Naive thymus-derived CD4-positive, alpha-beta T cell (primary cell): ENCODE measurements at regions of chr6 and their contacts with region 1.

Region 1: DNA sequence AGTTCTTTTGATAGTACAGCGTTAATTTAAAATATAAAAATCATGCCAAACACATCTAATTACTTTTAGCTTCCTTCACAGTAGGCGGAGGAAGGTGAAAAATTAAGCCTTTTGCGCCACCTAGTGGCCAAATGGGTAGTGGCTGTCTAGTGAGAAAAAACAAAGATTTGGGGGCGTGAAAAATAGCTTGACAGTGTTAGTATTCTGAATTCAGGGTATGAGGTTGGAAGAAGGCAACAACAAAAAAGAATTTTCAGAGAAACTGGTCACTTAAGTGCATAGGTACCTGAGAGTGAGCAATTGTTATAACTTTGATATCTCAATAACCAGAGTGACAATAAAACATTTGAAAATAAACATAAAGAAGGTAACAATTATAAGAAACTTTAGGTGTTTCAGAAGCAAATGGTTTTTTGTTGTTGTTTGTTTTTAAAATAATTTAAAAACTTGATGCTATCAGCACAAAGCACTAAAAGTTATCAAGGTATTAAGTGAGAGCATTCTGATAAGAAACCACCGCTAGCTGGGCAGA is 14.3 kb downstream of the PSMB9 start:
- DNase-seq: peak; percentile 69 to 87 (median 82)
- ATAC-seq: peak; percentile 87
- H3K4me3 ChIP-seq: no peak overlapping the region
- H3K4me3 Mint-ChIP-seq: peak overlapping the region in 3 of 10 donors; percentile 0 to 65 (median 50)
- H3K27ac ChIP-seq: no peak overlapping the region
- H3K27ac Mint-ChIP-seq: peak overlapping the region in 4 of 9 donors; percentile 1 to 78 (median 14)
- H3K4me1 ChIP-seq: peaks cover 4 to 20% of the 10 kb centered on the region in 2 donors
- H3K4me1 Mint-ChIP-seq: peaks cover 18 to 36% (median 34%) of the 10 kb centered on the region in 7 donors
- H3K27me3 ChIP-seq: no peaks in the 10 kb centered on the region
- H3K27me3 Mint-ChIP-seq: peaks cover 0 to 4% (median 0%) of the 10 kb centered on the region in 5 donors

Region 2: DNA sequence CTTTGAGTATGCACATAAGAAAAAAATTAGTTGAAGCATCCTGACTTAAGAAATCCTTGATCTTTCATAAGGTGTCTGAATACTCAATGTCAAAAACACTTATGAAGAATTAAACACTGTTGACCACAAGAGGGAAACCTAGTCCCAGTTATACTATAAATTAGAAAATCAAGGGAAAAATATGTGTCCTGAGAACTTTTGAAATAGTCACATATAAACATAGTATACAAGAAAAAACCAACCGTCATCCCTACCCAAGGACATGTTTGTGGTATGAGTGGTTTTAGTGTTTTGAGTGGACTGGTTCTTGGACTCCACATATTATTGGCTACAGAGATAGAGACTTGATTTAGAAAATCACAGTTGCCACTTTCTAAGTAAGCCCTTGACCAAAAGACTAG is 436.3 kb before region 1 on chr6:
- CTCF ChIA-PET with region 1: interaction called, 6 read pairs
- POLR2A ChIA-PET with region 1: no interaction called
- intact Hi-C with region 1: loop called in 1 of 2 experiments (anchors 1 kb)
- DNase-seq: peak in 5 of 9 donors; percentile 16 to 47 (median 33)
- ATAC-seq: peak; percentile 52
- H3K4me3 ChIP-seq: no peak overlapping the region
- H3K4me3 Mint-ChIP-seq: no peak overlapping the region
- H3K27ac ChIP-seq: no peak overlapping the region
- H3K27ac Mint-ChIP-seq: no peak overlapping the region
- H3K4me1 ChIP-seq: no peaks in the 10 kb centered on the region
- H3K4me1 Mint-ChIP-seq: peaks cover 0 to 2% (median 0%) of the 10 kb centered on the region in 7 donors
- H3K27me3 ChIP-seq: peaks cover 0 to 4% of the 10 kb centered on the region in 2 donors
- H3K27me3 Mint-ChIP-seq: peaks cover 0 to 47% (median 3%) of the 10 kb centered on the region in 5 donors

Region 3: DNA sequence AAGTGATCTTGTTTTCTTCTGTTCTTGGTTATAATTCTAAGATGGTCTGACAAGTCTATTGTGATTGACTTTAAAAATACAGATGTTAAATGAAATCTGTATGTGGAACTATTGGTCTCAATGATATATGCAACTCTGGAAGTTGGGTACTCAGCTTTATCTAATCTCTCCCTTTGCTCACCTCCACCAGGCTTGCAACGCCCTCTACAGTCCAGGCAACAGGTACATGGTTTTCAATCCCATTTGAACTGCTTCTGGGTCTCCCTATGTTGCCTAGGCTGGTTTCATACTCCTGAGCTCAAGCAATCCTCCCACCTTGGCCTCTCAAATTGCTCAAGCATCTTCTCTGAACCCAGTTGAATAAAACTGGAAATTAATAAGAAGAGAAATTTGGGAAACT is 176.3 kb before region 1 on chr6:
- CTCF ChIA-PET with region 1: interaction called, 4 read pairs
- POLR2A ChIA-PET with region 1: no interaction called
- intact Hi-C with region 1: loop called in 1 of 2 experiments (anchors 2 kb)
- DNase-seq: peak in 8 of 9 donors; percentile 13 to 62 (median 46)
- ATAC-seq: peak; percentile 76
- H3K4me3 ChIP-seq: no peak overlapping the region
- H3K4me3 Mint-ChIP-seq: no peak overlapping the region
- H3K27ac ChIP-seq: no peak overlapping the region
- H3K27ac Mint-ChIP-seq: no peak overlapping the region
- H3K4me1 ChIP-seq: peaks cover 0 to 1% of the 10 kb centered on the region in 2 donors
- H3K4me1 Mint-ChIP-seq: peaks cover 4 to 16% (median 7%) of the 10 kb centered on the region in 7 donors
- H3K27me3 ChIP-seq: no peaks in the 10 kb centered on the region
- H3K27me3 Mint-ChIP-seq: peaks cover 3 to 58% (median 23%) of the 10 kb centered on the region in 5 donors

Region 4: GRCh38 chr6:32785781-32786533 is 82.4 kb before region 1 on chr6:
- CTCF ChIA-PET with region 1: interaction called, 3 read pairs
- POLR2A ChIA-PET with region 1: interaction called, 3 read pairs
- intact Hi-C with region 1: loop called in 1 of 2 experiments (anchors 1 kb)
- DNase-seq: peak in 6 of 9 donors; percentile 28 to 54 (median 36)
- ATAC-seq: peak; percentile 76
- H3K4me3 ChIP-seq: no peak overlapping the region
- H3K4me3 Mint-ChIP-seq: no peak overlapping the region
- H3K27ac ChIP-seq: no peak overlapping the region
- H3K27ac Mint-ChIP-seq: no peak overlapping the region
- H3K4me1 ChIP-seq: no peaks in the 10 kb centered on the region
- H3K4me1 Mint-ChIP-seq: peaks cover 0 to 2% (median 0%) of the 10 kb centered on the region in 7 donors
- H3K27me3 ChIP-seq: no peaks in the 10 kb centered on the region
- H3K27me3 Mint-ChIP-seq: peaks cover 13 to 68% (median 21%) of the 10 kb centered on the region in 5 donors

Region 5: GRCh38 chr6:32825966-32826365 is 42.4 kb before region 1 on chr6:
- CTCF ChIA-PET with region 1: interaction called, 62 read pairs
- POLR2A ChIA-PET with region 1: no interaction called
- intact Hi-C with region 1: loop called in 1 of 2 experiments (anchors 1 kb)
- DNase-seq: peak in 1 of 9 donors; percentile 14
- ATAC-seq: no peak
- H3K4me3 ChIP-seq: no peak overlapping the region
- H3K4me3 Mint-ChIP-seq: no peak overlapping the region
- H3K27ac ChIP-seq: no peak overlapping the region
- H3K27ac Mint-ChIP-seq: peak overlapping the region in 4 of 9 donors; percentile 13 to 43 (median 30)
- H3K4me1 ChIP-seq: no peaks in the 10 kb centered on the region
- H3K4me1 Mint-ChIP-seq: peaks cover 0 to 40% (median 4%) of the 10 kb centered on the region in 7 donors
- H3K27me3 ChIP-seq: no peaks in the 10 kb centered on the region
- H3K27me3 Mint-ChIP-seq: no peaks in the 10 kb centered on the region

Region 6: GRCh38 chr6:32843979-32844838 is 24.1 kb before region 1 on chr6 and contains the start of gene PSMB8:
- CTCF ChIA-PET with region 1: interaction called, 177 read pairs
- POLR2A ChIA-PET with region 1: interaction called, 99 read pairs
- intact Hi-C with region 1: no loop called
- DNase-seq: peak; percentile 92 to 99 (median 97)
- ATAC-seq: peak; percentile 90
- H3K4me3 ChIP-seq: peak within 1 kb of the TSS; percentile 97
- H3K4me3 Mint-ChIP-seq: peak within 1 kb of the TSS; percentile 92 to 99 (median 98)
- H3K27ac ChIP-seq: peak within 1 kb of the TSS; percentile 97
- H3K27ac Mint-ChIP-seq: peak within 1 kb of the TSS; percentile 99 to 100 (median 100)
- H3K4me1 ChIP-seq: peaks cover 71 to 72% of the 10 kb centered on the region in 2 donors
- H3K4me1 Mint-ChIP-seq: peaks cover 66 to 83% (median 79%) of the 10 kb centered on the region in 7 donors
- H3K27me3 ChIP-seq: no peaks in the 10 kb centered on the region
- H3K27me3 Mint-ChIP-seq: no peaks in the 10 kb centered on the region
- total RNA-seq, gene PSMB8: 111 to 419 (median 115) TPM

Region 7: DNA sequence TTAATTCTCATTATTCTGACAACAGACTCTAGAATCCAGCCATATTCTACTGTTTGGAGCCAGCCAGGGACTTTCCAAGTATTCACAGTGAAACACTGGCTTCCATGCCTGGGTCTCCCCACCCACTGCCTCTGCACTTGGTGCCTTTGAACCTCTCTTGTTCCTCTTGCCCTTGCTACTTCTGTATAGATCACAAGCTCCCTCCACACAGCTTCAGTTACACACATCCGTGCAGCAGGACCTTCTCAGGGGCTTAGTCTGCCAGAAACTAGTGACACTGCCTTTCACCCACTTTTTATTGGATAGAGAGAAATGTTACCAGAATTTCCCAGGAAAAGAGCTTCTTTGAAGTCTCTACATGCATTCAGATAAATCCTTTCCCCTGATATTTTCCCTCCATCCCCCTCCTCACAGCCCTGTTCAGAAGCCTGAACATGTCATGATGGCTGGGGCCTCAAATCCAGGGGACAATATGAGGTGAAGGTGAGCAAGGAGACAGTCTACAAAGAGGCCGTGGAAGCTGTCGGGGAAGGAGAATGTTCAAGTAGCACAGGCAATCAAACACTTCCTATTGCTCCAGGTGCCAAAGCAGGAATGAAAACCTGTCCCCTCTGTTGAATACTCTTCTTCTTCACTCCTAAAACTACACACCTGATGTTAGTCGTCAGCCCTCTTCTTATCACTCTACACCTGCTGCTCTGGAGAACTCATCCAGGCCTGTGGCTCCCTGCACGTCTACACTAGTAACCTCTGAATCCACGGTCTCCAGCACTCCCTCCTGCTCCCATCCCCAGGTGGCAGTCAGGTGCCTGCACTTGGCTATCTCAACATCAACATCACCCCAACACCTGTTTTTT is 161.2 kb after region 1 on chr6:
- CTCF ChIA-PET with region 1: no interaction called
- POLR2A ChIA-PET with region 1: no interaction called
- intact Hi-C with region 1: no loop called
- DNase-seq: no peak
- ATAC-seq: peak; percentile 88
- H3K4me3 ChIP-seq: no peak overlapping the region
- H3K4me3 Mint-ChIP-seq: peak overlapping the region in 1 of 10 donors; percentile 20
- H3K27ac ChIP-seq: no peak overlapping the region
- H3K27ac Mint-ChIP-seq: peak overlapping the region in 1 of 9 donors; percentile 85
- H3K4me1 ChIP-seq: peaks cover 0 to 4% of the 10 kb centered on the region in 2 donors
- H3K4me1 Mint-ChIP-seq: peaks cover 0 to 25% (median 0%) of the 10 kb centered on the region in 7 donors
- H3K27me3 ChIP-seq: no peaks in the 10 kb centered on the region
- H3K27me3 Mint-ChIP-seq: peaks cover 3 to 51% (median 4%) of the 10 kb centered on the region in 5 donors

Region 8: GRCh38 chr6:33896391-33897183 is 1028.3 kb after region 1 on chr6:
- CTCF ChIA-PET with region 1: no interaction called
- POLR2A ChIA-PET with region 1: no interaction called
- intact Hi-C with region 1: no loop called
- DNase-seq: peak in 1 of 9 donors; percentile 40
- ATAC-seq: no peak
- H3K4me3 ChIP-seq: no peak overlapping the region
- H3K4me3 Mint-ChIP-seq: peak overlapping the region in 3 of 10 donors; percentile 12 to 70 (median 28)
- H3K27ac ChIP-seq: no peak overlapping the region
- H3K27ac Mint-ChIP-seq: peak overlapping the region in 2 of 9 donors; percentile 25 to 85
- H3K4me1 ChIP-seq: peaks cover 17 to 20% of the 10 kb centered on the region in 2 donors
- H3K4me1 Mint-ChIP-seq: peaks cover 16 to 58% (median 40%) of the 10 kb centered on the region in 7 donors
- H3K27me3 ChIP-seq: no peaks in the 10 kb centered on the region
- H3K27me3 Mint-ChIP-seq: peaks cover 0 to 5% (median 0%) of the 10 kb centered on the region in 5 donors